Right ventricle myocardium inferior (tissue), 1 donor: ENCODE measurements at regions of chr12 and their contacts with region 1.

Region 1: GRCh38 chr12:113310489-113310888 is 24.4 kb downstream of the SLC8B1 start:
- DNase-seq: no peak
- ATAC-seq: no peak

Region 2: GRCh38 chr12:113424915-113425823 is 114.7 kb after region 1 on chr12:
- intact Hi-C with region 1: loop called (anchors 2 kb)
- DNase-seq: peak; percentile 71
- ATAC-seq: no peak